ENCODE measurements at regions of chr4 and their contacts with region 1.

Region 1: GRCh38 chr4:85798012-85798770 is 323.2 kb downstream of the ARHGAP24 start:
- DNase-seq: no peak
- ATAC-seq: no peak
- H3K4me3 ChIP-seq: no peak overlapping the region
- H3K27ac ChIP-seq: no peak overlapping the region
- H3K4me1 ChIP-seq: no peaks in the 10 kb centered on the region
- CTCF ChIP-seq: no peak
- EP300 ChIP-seq: no peak
- POLR2A ChIP-seq: no peak
- RAD21 ChIP-seq: no peak

Region 2: DNA sequence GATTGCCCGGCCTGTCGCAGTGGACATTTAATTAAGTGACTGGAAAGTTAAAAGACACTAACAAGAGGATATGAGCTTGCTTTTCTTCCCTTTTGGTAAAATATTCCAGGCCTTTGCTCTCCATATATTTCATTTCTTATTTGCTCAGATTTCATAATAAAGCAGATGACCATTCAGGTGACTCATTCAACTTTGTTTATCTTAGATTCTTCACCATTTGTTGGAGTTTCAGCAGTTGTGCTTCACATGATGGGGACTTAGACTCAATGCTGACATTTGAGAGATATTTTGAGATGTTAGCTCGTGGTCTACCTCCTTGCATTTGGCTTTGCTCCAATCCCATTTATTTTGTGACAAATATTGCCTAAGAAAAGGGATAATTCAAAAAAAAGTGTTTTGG is 11.1 kb before region 1 on chr4:
- CTCF ChIA-PET with region 1: interaction called, 11 read pairs
- POLR2A ChIA-PET with region 1: no interaction called
- DNase-seq: peak in 1 of 2 experiments; percentile 44
- ATAC-seq: peak in 1 of 2 experiments; percentile 51; a peak in 2 of 6 replicates
- H3K4me3 ChIP-seq: no peak overlapping the region
- H3K27ac ChIP-seq: peak overlapping the region; percentile 62 to 82; a peak in 5 of 6 replicates
- H3K4me1 ChIP-seq: peaks cover 26% of the 10 kb centered on the region
- CTCF ChIP-seq: no peak
- EP300 ChIP-seq: no peak
- POLR2A ChIP-seq: no peak
- RAD21 ChIP-seq: no peak

Region 3: DNA sequence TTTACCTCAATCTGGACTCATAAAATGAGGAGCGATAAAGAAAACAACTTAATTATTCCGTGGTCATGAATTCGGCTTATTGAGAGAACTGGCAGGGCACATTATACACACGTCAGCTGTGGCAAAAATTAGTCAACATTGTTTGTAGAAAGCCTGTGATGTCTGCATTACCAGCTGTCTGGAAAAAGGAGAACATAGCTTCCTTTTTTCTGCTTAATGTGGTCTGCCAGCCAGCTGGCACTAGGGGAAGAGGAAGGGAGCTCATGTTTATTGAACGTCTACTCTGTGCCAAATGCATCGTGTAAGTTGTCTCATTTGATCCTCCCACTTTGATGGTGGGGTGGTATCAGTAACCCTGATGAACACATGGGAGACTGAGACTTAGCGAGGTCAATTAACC is 44.3 kb after region 1 on chr4:
- CTCF ChIA-PET with region 1: no interaction called
- POLR2A ChIA-PET with region 1: no interaction called
- DNase-seq: no peak
- ATAC-seq: no peak
- H3K4me3 ChIP-seq: no peak overlapping the region
- H3K27ac ChIP-seq: no peak overlapping the region
- H3K4me1 ChIP-seq: no peaks in the 10 kb centered on the region
- CTCF ChIP-seq: no peak
- EP300 ChIP-seq: no peak
- POLR2A ChIP-seq: no peak
- RAD21 ChIP-seq: no peak

Region 4: DNA sequence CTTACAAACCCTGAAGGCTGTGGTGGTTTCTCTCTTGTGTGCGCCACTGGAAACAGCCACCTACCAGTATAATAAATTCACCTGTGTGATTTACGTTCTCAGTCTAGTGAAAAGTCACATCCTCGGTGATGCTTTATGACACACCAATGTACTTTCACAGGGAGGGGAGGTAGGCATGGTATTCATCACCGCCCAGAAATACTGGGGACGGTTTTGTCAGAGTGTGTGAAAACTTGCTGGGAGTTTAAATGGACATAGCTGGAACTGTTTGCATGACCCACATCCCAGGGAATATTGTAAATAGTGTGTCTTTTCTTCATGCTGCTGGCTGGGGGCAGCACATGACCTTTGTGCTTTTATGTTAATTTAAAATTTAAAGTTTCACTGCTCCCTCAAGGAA is 139.9 kb after region 1 on chr4:
- CTCF ChIA-PET with region 1: interaction called, 11 read pairs
- POLR2A ChIA-PET with region 1: no interaction called
- DNase-seq: no peak
- ATAC-seq: peak in 1 of 2 experiments; percentile 30; a peak in 2 of 6 replicates
- H3K4me3 ChIP-seq: no peak overlapping the region
- H3K27ac ChIP-seq: peak overlapping the region in 1 of 2 experiments; percentile 63; a peak in 3 of 6 replicates
- H3K4me1 ChIP-seq: peaks cover 15% of the 10 kb centered on the region
- CTCF ChIP-seq: no peak
- EP300 ChIP-seq: no peak
- POLR2A ChIP-seq: no peak
- RAD21 ChIP-seq: no peak

Region 5: DNA sequence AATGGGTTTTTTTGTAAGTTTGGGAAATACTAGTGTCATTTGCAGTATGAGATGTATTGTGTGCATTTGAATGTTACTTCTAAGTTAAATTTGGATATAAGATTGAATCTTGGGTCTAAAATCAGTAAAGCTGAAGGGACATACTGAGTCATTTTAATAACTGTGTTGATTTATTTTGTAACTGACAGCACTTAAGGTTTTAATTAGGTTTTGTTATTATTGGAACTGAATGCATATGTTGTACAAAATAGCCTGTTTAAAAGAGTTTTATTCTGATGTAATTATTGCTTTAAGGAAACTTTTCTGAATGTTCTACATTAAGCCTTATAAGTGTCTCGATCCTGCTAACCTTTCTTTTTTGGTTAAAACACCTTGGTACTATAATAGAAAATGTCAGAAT is 165.0 kb after region 1 on chr4:
- CTCF ChIA-PET with region 1: interaction called, 117 read pairs
- POLR2A ChIA-PET with region 1: no interaction called
- DNase-seq: no peak
- ATAC-seq: no peak
- H3K4me3 ChIP-seq: no peak overlapping the region
- H3K27ac ChIP-seq: no peak overlapping the region
- H3K4me1 ChIP-seq: no peaks in the 10 kb centered on the region
- CTCF ChIP-seq: no peak
- EP300 ChIP-seq: no peak
- POLR2A ChIP-seq: no peak
- RAD21 ChIP-seq: no peak

Region 6: DNA sequence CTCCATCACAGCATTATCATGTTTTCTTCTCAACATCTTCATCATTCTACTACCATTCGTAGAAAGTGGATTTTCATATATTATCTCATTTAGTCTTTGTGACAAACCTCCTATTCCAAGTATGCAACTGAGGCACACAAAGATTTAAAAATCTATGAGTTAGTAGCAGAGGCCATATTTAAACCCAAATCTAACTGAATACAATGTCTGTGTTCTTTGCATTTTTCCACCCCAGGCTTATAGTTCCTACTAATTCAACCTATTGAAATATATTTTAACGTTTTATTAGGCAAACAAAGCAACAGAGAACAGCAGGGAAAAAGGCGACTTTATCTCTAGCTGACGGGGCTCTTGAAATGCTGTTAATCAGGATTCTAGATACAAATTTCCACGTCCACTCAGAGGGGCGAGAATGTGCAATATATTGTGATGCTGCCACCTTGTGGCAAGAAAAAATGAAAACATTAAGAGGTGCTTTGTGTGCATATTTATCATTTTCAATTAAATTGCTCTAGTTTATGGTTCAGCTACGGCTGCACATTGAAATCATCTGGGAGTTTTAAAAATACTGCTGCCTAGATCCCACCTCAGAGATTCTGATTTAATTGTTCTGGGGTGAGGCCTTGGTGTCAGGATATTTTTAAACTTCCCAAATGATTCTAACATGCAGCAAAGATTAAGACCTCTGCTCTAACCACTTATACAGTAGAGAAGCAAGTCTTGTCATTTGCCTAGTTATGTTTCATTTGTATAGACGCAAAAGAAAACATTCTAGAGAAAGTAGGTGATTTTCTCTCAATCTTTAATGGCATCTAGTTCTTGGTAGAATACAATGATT is 245.8 kb after region 1 on chr4:
- CTCF ChIA-PET with region 1: interaction called, 27 read pairs
- POLR2A ChIA-PET with region 1: no interaction called
- DNase-seq: peak; percentile 6 to 42
- ATAC-seq: peak in 1 of 2 experiments; percentile 75; a peak in 3 of 6 replicates
- H3K4me3 ChIP-seq: no peak overlapping the region
- H3K27ac ChIP-seq: no peak overlapping the region
- H3K4me1 ChIP-seq: peaks cover 9% of the 10 kb centered on the region; the same call in 1 of the 3 replicates
- CTCF ChIP-seq: peak; percentile 70
- EP300 ChIP-seq: no peak
- POLR2A ChIP-seq: no peak
- RAD21 ChIP-seq: peak; percentile 72 to 74